ENCODE measurements at regions of chr1 and their contacts with region 1.

Region 1: DNA sequence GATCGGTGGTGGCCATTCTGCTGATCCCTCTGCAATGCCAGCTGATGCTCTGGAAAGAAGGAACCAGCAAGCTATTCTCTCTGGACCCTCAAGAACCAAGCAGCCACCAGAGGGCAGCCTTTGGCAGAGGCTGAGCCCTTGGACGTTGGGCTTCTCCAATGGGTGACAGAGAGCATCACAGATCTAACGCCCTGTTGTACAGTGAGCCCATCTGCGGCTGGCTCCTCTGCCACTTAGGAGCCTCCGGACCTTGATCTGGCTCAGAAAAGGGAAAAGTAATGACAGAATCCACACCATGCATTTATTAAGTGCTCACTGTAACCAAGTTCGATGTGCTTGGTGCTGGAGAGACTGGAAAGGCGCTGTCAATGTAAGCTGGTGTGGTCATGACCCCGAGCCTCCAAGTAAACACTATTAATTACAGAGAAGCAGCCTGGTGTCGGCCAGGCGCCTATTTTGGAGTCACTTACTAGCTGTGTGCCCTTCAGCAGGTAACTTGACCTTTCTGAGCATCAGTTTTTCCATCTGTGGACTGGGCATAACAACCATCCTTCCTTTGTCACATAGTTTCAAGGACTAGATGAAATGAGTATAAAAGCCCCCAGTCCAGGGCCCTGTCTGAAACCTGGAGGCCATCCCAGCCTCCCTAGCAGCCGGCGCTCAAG is 34.9 kb downstream of the ECE1 start:
- DNase-seq: peak; percentile 90
- ATAC-seq: peak; percentile 64
- H3K4me3 Mint-ChIP-seq: no peak overlapping the region
- H3K27ac Mint-ChIP-seq: peak overlapping the region; percentile 84
- H3K4me1 Mint-ChIP-seq: peaks cover 48% of the 10 kb centered on the region
- H3K27me3 Mint-ChIP-seq: no peaks in the 10 kb centered on the region

Region 2: GRCh38 chr1:21216835-21217811 is 38.3 kb before region 1 on chr1:
- CTCF ChIA-PET with region 1: no interaction called
- POLR2A ChIA-PET with region 1: no interaction called
- intact Hi-C with region 1: no loop called
- DNase-seq: peak; percentile 86
- ATAC-seq: peak; percentile 71
- H3K4me3 Mint-ChIP-seq: no peak overlapping the region
- H3K27ac Mint-ChIP-seq: peak overlapping the region; percentile 37
- H3K4me1 Mint-ChIP-seq: no peaks in the 10 kb centered on the region
- H3K27me3 Mint-ChIP-seq: no peaks in the 10 kb centered on the region

Region 3: DNA sequence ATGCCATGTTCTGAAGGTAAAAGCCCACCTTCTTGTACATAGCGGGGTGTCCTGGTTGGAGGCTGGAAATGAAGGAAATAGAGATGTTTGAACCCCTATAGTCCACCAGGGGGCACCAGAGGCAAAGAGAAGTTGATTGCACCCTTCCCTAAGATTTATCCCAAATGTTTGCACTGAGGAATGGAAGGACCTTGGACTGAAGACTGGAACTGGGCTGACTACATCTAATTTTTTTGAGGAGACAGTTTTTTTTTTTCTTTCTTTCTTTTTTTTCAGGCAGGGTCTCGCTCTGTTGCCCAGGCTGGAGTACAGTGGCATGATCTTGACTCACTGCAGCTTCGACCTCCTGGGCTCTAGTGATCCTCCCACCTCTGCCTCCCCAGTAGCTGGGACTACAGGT is 23.4 kb before region 1 on chr1:
- CTCF ChIA-PET with region 1: interaction called, 12 read pairs
- POLR2A ChIA-PET with region 1: interaction called, 4 read pairs
- intact Hi-C with region 1: no loop called
- DNase-seq: peak; percentile 38
- ATAC-seq: no peak
- H3K4me3 Mint-ChIP-seq: no peak overlapping the region
- H3K27ac Mint-ChIP-seq: no peak overlapping the region
- H3K4me1 Mint-ChIP-seq: no peaks in the 10 kb centered on the region
- H3K27me3 Mint-ChIP-seq: no peaks in the 10 kb centered on the region

Region 4: GRCh38 chr1:21334214-21335087 is 79.0 kb after region 1 on chr1:
- CTCF ChIA-PET with region 1: interaction called, 7 read pairs
- POLR2A ChIA-PET with region 1: no interaction called
- intact Hi-C with region 1: loop called in 1 of 2 experiments (anchors 1 kb)
- DNase-seq: peak; percentile 87
- ATAC-seq: peak; percentile 84
- H3K4me3 Mint-ChIP-seq: peak overlapping the region; percentile 80
- H3K27ac Mint-ChIP-seq: peak overlapping the region; percentile 97
- H3K4me1 Mint-ChIP-seq: peaks cover 97% of the 10 kb centered on the region
- H3K27me3 Mint-ChIP-seq: no peaks in the 10 kb centered on the region